CD8-positive, alpha-beta T cell (primary cell): ENCODE measurements at regions of chr20 and their contacts with region 1.

Region 1: GRCh38 chr20:58209652-58210397 is 18.6 kb downstream of the ANKRD60 start:
- DNase-seq: peak; percentile 78 to 95 (median 87)
- ATAC-seq: peak; percentile 90
- H3K4me3 ChIP-seq: no peak overlapping the region
- H3K4me3 Mint-ChIP-seq: peak overlapping the region; percentile 1
- H3K27ac ChIP-seq: peak overlapping the region in 1 of 2 experiments; percentile 43
- H3K27ac Mint-ChIP-seq: peak overlapping the region; percentile 76
- H3K4me1 ChIP-seq: no peaks in the 10 kb centered on the region
- H3K4me1 Mint-ChIP-seq: peaks cover 3% of the 10 kb centered on the region
- H3K27me3 ChIP-seq: peaks cover 0 to 7% of the 10 kb centered on the region in 2 experiments
- H3K27me3 Mint-ChIP-seq: peaks cover 9% of the 10 kb centered on the region
- CTCF ChIP-seq: peak; percentile 100

Region 2: DNA sequence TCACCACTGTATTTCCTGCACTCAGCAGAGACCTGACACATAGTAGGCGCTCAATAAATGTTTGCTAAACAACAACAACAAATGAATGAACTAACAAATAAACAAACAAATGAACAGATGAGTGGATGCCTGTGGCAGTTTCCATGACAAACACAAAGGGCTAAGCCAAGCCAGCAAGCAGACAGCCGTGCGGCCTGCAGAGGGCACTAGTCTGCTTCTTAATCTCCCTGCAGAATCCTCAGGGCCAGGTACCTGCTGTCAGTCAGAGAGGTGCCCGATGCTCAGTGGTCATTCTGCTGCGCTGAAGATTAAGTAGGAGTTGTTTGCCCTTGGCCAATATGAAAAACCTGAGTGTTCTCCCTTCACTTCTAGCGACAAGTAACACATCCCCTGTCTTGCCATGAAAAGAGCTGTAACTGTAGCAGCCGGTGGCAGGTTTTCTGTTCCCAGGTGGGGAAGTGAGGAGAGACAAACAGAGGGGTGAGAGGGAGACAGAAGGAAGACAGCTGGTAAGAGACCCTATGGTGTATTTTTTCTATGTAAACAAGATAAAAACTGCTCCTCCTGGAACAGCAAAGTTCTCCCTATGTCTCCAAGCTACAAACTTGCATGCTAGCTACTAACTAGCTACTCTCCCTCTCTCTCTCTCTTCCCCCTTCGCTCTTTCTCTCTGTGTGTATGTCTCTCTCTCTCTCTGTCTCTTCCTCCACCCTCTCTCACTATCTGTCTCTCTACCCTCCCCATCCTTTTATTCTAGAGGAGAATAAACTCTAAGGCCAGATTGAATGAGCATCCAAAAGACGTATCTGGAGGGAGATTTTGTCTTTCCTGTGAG is 1961.7 kb before region 1 on chr20 and contains the start of gene MC3R:
- CTCF ChIA-PET with region 1: no interaction called
- POLR2A ChIA-PET with region 1: no interaction called
- intact Hi-C with region 1: loop called in 1 of 2 experiments (anchors 5 kb)
- DNase-seq: peak in 6 of 9 experiments; percentile 11 to 52 (median 32)
- ATAC-seq: no peak
- H3K4me3 ChIP-seq: no peak within 1 kb of the TSS
- H3K4me3 Mint-ChIP-seq: no peak within 1 kb of the TSS
- H3K27ac ChIP-seq: no peak within 1 kb of the TSS
- H3K27ac Mint-ChIP-seq: peak within 1 kb of the TSS; percentile 2
- H3K4me1 ChIP-seq: no peaks in the 10 kb centered on the region
- H3K4me1 Mint-ChIP-seq: no peaks in the 10 kb centered on the region
- H3K27me3 ChIP-seq: no peaks in the 10 kb centered on the region
- H3K27me3 Mint-ChIP-seq: peaks cover 45% of the 10 kb centered on the region
- CTCF ChIP-seq: peak; percentile 34
- total RNA-seq, gene MC3R: not detected

Region 3: GRCh38 chr20:57089691-57090150 is 1120.1 kb before region 1 on chr20:
- CTCF ChIA-PET with region 1: no interaction called
- POLR2A ChIA-PET with region 1: no interaction called
- intact Hi-C with region 1: loop called (anchors 2 to 10 kb)
- DNase-seq: peak; percentile 19 to 61 (median 50)
- ATAC-seq: peak; percentile 56
- H3K4me3 ChIP-seq: no peak overlapping the region
- H3K4me3 Mint-ChIP-seq: no peak overlapping the region
- H3K27ac ChIP-seq: no peak overlapping the region
- H3K27ac Mint-ChIP-seq: no peak overlapping the region
- H3K4me1 ChIP-seq: peaks cover 6% of the 10 kb centered on the region
- H3K4me1 Mint-ChIP-seq: peaks cover 16% of the 10 kb centered on the region
- H3K27me3 ChIP-seq: no peaks in the 10 kb centered on the region
- H3K27me3 Mint-ChIP-seq: peaks cover 18% of the 10 kb centered on the region
- CTCF ChIP-seq: peak; percentile 61

Region 4: DNA sequence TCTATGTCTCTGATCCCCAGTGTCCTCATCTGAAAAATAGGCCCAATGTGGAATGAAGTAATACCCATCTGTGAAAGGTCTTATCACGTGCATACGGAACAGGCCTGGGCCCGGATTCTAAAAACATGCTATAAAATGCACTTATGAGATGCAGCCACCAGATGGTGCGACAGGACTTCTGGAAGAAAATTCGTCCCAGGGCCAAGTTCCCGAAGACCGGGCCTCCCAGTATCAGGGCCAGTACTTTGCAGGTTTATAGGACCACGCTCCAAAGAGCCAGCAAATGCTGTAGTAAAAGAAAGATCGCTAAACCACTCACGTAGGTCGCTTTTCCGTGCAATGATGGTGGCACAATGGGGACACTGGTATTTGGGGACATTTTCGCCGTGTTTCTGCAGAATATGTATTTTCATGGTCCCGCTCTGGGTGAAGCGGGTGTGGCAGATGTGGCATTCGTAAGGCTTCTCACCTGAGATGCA is 695.5 kb before region 1 on chr20:
- CTCF ChIA-PET with region 1: interaction called, 3 read pairs
- POLR2A ChIA-PET with region 1: no interaction called
- intact Hi-C with region 1: loop called (anchors 1 kb)
- DNase-seq: peak in 5 of 9 experiments; percentile 19 to 52 (median 32)
- ATAC-seq: no peak
- H3K4me3 ChIP-seq: no peak overlapping the region
- H3K4me3 Mint-ChIP-seq: no peak overlapping the region
- H3K27ac ChIP-seq: no peak overlapping the region
- H3K27ac Mint-ChIP-seq: no peak overlapping the region
- H3K4me1 ChIP-seq: no peaks in the 10 kb centered on the region
- H3K4me1 Mint-ChIP-seq: no peaks in the 10 kb centered on the region
- H3K27me3 ChIP-seq: no peaks in the 10 kb centered on the region
- H3K27me3 Mint-ChIP-seq: peaks cover 14% of the 10 kb centered on the region
- CTCF ChIP-seq: no peak

Region 5: DNA sequence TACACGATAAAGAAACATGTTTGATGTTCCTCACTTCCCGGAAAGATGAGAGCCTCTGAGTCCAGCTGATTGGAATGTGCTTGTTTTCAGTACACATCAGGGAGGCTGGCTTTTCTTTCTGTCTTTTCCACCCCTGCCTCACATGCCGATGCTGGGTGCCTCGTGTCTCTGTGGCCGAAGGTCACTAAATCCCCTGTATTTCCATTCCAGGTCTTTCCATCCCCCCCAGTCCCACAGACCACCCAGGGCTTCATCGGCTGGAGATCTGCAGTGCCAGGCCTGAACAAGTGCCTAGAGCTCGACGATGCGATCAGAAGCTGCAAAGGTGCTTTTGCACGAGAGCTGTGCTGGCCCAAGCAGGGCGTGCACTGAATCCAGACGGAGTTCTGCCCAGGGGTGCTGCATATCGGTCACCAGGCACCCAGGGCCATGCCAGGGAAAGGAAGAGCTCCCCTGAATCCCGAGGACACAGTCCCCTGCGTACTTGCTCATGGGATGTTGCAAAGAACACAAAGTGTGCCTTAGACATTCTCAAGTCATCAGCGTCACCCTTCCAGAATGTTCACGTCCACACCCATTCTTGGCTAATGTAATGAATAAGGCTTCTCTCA is 49.3 kb before region 1 on chr20:
- CTCF ChIA-PET with region 1: no interaction called
- POLR2A ChIA-PET with region 1: no interaction called
- intact Hi-C with region 1: no loop called
- DNase-seq: no peak
- ATAC-seq: no peak
- H3K4me3 ChIP-seq: no peak overlapping the region
- H3K4me3 Mint-ChIP-seq: no peak overlapping the region
- H3K27ac ChIP-seq: no peak overlapping the region
- H3K27ac Mint-ChIP-seq: no peak overlapping the region
- H3K4me1 ChIP-seq: no peaks in the 10 kb centered on the region
- H3K4me1 Mint-ChIP-seq: no peaks in the 10 kb centered on the region
- H3K27me3 ChIP-seq: no peaks in the 10 kb centered on the region
- H3K27me3 Mint-ChIP-seq: peaks cover 3% of the 10 kb centered on the region
- CTCF ChIP-seq: no peak

Region 6: DNA sequence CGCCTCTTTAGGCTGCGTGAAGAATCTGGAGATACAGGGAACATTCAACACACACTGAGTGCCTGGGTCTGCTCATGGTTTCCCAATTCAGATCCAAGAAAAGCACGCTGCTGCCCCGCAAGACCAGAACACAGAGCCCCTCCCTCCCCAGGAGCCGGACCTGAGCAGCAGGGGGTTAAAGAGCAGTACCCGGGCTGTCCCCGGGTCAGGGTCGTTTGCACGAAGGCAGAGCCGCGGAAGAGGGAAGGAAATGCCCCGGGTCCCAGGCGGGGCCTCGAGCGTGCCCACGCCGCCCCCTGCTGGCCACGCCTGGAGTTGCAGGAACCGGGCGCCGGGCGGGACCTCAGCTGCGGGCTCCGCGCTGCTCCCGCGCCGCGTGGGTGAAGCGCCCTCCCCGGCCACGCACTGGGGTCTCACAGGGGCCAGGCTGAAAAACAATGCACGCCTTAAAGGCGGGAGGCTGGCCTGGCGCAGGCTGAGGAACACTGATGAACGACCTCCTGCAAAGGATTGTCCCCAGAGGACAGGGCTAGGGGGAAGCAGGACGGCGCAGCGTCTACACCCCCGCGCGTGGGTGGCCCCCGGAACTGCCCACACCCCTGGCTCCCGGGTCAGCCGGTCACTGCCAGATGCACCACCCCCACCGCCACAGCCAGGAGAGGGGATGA is 30.3 kb before region 1 on chr20:
- CTCF ChIA-PET with region 1: interaction called, 3 read pairs
- POLR2A ChIA-PET with region 1: no interaction called
- intact Hi-C with region 1: loop called in 1 of 2 experiments (anchors 1 kb)
- DNase-seq: peak; percentile 52 to 83 (median 66)
- ATAC-seq: peak; percentile 98
- H3K4me3 ChIP-seq: peak overlapping the region; percentile 26 to 48
- H3K4me3 Mint-ChIP-seq: peak overlapping the region; percentile 68
- H3K27ac ChIP-seq: no peak overlapping the region
- H3K27ac Mint-ChIP-seq: no peak overlapping the region
- H3K4me1 ChIP-seq: peaks cover 9% of the 10 kb centered on the region
- H3K4me1 Mint-ChIP-seq: peaks cover 8% of the 10 kb centered on the region
- H3K27me3 ChIP-seq: peaks cover 3 to 6% of the 10 kb centered on the region in 2 experiments
- H3K27me3 Mint-ChIP-seq: peaks cover 24% of the 10 kb centered on the region
- CTCF ChIP-seq: peak; percentile 100